ENCODE measurements at regions of chr11 and their contacts with region 1.

Region 1: DNA sequence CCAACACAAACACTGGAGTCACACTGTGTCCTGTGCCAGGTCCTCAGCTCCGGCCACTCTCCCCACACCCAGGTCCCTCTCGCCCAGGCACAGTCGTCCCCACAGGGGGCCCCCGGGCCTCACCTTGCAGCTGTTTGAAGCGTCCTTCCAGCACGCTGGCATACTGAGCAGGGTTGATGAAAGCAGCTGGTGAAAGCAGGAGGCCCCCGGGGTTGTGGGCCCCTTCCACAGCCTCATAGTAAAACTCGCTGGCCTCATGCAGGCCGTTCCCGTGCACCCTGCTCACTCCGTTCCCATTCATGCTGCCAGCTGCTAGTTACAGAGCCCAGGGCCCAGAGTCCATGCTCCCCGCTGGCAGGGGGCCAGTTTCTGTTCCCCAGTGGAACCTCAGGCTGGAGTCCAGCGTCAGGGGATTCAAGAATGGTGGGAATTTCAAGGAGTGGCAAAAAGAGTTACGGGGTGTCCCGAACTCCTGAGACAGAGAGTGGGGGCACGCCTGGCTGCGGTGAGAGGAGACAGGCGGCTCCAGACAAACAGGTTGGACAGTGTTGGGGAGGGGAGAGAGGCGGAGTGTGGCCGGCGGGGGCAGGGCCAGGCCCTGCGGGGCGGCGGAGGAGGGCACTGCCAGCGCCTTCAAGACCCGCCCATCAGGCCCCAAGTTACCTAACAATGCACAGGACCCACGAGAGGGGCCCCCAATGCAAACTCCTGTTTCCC is 10.5 kb downstream of the SPTBN2 start:
- DNase-seq: no peak
- ATAC-seq: no peak
- H3K4me3 ChIP-seq: no peak overlapping the region
- H3K27ac ChIP-seq: no peak overlapping the region
- H3K4me1 ChIP-seq: no peaks in the 10 kb centered on the region
- H3K27me3 ChIP-seq: peaks cover 0 to 8% (median 0%) of the 10 kb centered on the region in 3 donors
- CTCF ChIP-seq: no peak
- POLR2A ChIP-seq: no peak

Region 2: GRCh38 chr11:66815646-66816045 is 97.2 kb after region 1 on chr11:
- in situ Hi-C with region 1: loop called in 1 of 4 experiments (anchors 10 kb)
- intact Hi-C with region 1: no loop called
- DNase-seq: no peak
- ATAC-seq: no peak
- H3K4me3 ChIP-seq: no peak overlapping the region
- H3K27ac ChIP-seq: no peak overlapping the region
- H3K4me1 ChIP-seq: no peaks in the 10 kb centered on the region
- H3K27me3 ChIP-seq: no peaks in the 10 kb centered on the region
- CTCF ChIP-seq: no peak
- POLR2A ChIP-seq: no peak